IMR-90 (cell line): ENCODE measurements at regions of chr9 and their contacts with region 1.

Region 1: DNA sequence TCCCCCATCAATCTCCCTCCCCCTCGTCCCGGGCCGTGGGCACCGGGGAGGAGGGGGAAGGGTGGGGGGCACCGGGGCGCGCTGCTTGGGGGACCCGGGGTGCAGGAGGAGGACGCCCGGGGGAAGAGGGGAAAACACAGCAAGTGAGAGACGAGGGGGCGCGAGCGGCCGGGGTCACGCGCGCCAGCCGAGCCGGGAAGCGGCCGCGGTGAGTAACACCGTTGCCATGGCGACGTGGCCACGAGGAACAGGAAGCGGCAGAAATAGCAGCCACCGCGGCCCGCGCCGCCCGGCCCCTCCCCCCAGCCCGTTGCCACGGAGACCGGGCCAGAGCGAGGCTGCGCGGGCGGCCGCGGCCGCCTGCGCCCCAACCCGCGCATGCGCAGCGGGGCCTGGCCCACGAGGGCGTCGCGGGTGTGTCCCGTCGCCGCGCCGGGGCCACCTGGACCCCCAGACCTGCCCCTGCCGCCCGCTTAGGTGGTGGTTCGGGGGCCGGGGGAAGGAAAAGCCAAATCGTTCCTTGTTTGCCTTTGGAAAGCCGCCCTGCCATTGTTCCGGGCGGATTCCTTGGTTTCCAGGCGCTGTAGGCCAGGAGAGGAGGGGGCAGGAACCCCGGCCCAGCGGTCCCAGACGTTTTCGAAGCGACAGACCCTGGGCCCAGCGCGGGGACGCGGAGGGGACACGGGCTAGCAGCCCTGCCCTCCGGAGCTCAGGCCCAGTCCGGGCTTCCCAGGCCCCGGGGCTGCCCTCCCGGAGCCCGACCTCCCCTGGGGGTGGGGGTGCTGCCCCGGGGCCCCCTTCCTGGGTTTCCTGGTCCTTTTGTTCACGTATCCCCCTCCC is 207.1 kb downstream of the C9orf50 start:
- DNase-seq: peak; percentile 94
- ATAC-seq: peak; percentile 92
- H3K4me3 ChIP-seq: peak overlapping the region; percentile 32
- H3K27ac ChIP-seq: peak overlapping the region; percentile 99
- H3K4me1 ChIP-seq: peaks cover 21% of the 10 kb centered on the region
- H3K27me3 ChIP-seq: no peaks in the 10 kb centered on the region
- CTCF ChIP-seq: no peak
- POLR2A ChIP-seq: peak; percentile 46; the same call in 1 of the 2 replicates
- RAD21 ChIP-seq: no peak; the same call in 1 of the 2 replicates

Region 2: DNA sequence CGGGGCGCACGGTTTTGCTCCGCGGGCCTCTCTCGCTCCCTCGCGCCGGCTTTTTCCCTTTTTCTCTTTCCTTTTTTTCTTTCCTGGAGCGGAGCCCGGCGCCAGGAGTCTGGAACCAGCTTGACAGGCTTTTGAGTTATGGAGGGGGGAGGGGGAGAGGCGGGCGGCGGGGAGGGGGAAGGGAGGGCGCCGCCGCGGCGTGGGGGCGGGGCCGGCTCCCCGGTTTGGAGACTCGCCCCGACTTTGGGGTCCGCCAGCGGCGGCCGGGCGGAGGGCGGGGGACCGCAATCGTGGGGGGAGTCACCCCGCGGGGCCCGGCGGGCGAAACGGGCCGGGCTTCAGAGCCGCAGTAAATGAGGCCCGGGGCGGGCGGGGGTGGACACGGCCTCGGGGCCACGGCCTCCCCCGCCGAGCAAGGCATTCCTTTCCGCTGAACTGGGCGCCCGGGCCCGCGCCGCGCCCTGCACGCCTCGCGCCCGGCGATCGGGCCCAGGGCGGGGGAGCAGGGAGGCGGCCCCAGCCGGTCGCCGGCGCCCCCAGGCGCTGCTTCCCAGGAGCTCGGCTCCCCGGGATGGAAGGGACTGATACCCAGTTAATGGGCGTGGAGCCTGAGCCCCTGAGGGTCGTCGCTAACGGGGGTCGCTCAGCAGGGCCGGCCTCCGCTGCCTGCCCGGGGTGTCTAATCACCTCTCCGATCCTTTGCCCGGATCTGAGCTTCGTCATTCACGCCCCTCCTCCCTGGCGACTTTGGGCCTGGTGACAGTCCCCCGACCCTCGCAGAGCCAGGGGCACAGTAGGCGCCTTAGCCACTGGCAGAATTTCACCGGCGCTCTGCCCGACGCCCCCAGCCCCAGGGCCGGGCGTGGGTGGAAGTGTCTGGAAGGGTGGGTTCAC is 69.0 kb after region 1 on chr9:
- CTCF ChIA-PET with region 1: no interaction called
- POLR2A ChIA-PET with region 1: no interaction called
- dilution Hi-C with region 1: no loop called
- in situ Hi-C with region 1: no loop called
- intact Hi-C with region 1: loop called (anchors 2 kb)
- DNase-seq: peak; percentile 84
- ATAC-seq: peak; percentile 86
- H3K4me3 ChIP-seq: no peak overlapping the region
- H3K27ac ChIP-seq: peak overlapping the region; percentile 99
- H3K4me1 ChIP-seq: peaks cover 49% of the 10 kb centered on the region
- H3K27me3 ChIP-seq: no peaks in the 10 kb centered on the region
- CTCF ChIP-seq: peak; percentile 43
- POLR2A ChIP-seq: peak; percentile 30
- RAD21 ChIP-seq: peak; percentile 59